Caco-2 (cell line): ENCODE measurements at regions of chr1 and their contacts with region 1.

Region 1: GRCh38 chr1:111481387-111482221 is 7.8 kb downstream of the C1orf162 start:
- DNase-seq: peak; percentile 78 to 83
- H3K4me3 ChIP-seq: no peak overlapping the region
- H3K4me3 Mint-ChIP-seq: no peak overlapping the region
- H3K27ac Mint-ChIP-seq: no peak overlapping the region
- H3K4me1 ChIP-seq: no peaks in the 10 kb centered on the region
- H3K4me1 Mint-ChIP-seq: no peaks in the 10 kb centered on the region
- H3K27me3 ChIP-seq: no peaks in the 10 kb centered on the region
- H3K27me3 Mint-ChIP-seq: no peaks in the 10 kb centered on the region
- CTCF ChIP-seq: peak; percentile 63 to 75

Region 2: DNA sequence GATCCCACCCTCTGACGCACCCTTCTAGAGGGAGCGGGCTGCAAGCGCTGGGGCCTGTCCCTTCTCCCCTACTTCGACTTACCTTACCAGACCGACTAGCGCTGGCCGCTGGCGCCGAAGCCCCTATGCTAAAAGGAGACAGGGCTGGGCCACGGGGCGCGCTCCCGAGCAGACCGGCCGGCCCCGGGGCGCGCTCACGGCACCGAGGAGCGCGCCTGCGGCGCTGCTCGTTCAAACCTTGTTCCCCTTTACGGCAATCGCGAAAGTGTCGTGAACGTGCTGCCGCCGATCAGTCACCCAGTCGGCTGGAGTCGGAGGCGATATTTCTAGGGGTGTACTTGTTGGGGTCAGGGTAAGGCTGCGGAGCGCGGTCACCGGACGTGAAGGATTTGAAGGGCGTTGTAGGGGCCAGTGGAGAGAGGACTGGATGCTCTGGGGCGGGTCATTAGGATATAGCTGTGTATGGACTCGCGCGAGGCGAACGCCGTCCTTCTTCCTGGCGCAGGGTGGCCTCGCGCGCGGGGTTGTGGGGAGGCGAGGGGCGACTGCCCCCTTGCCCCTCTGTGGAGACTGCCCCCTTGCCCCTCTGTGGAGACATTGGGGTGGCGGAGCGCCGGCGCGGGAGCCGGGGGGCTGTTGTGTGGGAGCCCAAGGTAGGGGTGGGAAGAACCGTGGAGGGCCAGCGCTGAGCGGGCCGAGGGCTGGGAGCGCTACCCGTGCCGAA is 341.5 kb before region 1 on chr1 and contains the starts of genes CEPT1 and DRAM2:
- CTCF ChIA-PET with region 1: no interaction called
- POLR2A ChIA-PET with region 1: no interaction called
- intact Hi-C with region 1: no loop called
- DNase-seq: peak; percentile 93 to 95
- H3K4me3 ChIP-seq: peak within 1 kb of the TSS; percentile 56
- H3K4me3 Mint-ChIP-seq: peak within 1 kb of the TSS; percentile 87
- H3K27ac Mint-ChIP-seq: peak within 1 kb of the TSS; percentile 89
- H3K4me1 ChIP-seq: peaks cover 14% of the 10 kb centered on the region; the same call in 1 of the 2 replicates
- H3K4me1 Mint-ChIP-seq: peaks cover 18% of the 10 kb centered on the region
- H3K27me3 ChIP-seq: no peaks in the 10 kb centered on the region
- H3K27me3 Mint-ChIP-seq: no peaks in the 10 kb centered on the region
- CTCF ChIP-seq: no peak
- total RNA-seq, gene CEPT1: 17.3 and 19.1 TPM in 2 replicates
- total RNA-seq, gene DRAM2: 25.3 and 29.0 TPM in 2 replicates

Region 3: GRCh38 chr1:111448918-111449702 is 32.5 kb before region 1 on chr1 and contains the starts of genes ATP5PB and WDR77:
- CTCF ChIA-PET with region 1: no interaction called
- POLR2A ChIA-PET with region 1: no interaction called
- intact Hi-C with region 1: no loop called
- DNase-seq: peak; percentile 93 to 96
- H3K4me3 ChIP-seq: peak within 1 kb of the TSS; percentile 76
- H3K4me3 Mint-ChIP-seq: peak within 1 kb of the TSS; percentile 97
- H3K27ac Mint-ChIP-seq: peak within 1 kb of the TSS; percentile 99
- H3K4me1 ChIP-seq: peaks cover 14% of the 10 kb centered on the region
- H3K4me1 Mint-ChIP-seq: peaks cover 20% of the 10 kb centered on the region
- H3K27me3 ChIP-seq: no peaks in the 10 kb centered on the region
- H3K27me3 Mint-ChIP-seq: no peaks in the 10 kb centered on the region
- CTCF ChIP-seq: no peak
- total RNA-seq, gene ATP5PB: 194 and 219 TPM in 2 replicates
- total RNA-seq, gene WDR77: 30.1 and 31.9 TPM in 2 replicates

Region 4: GRCh38 chr1:111463029-111463683 is 18.4 kb before region 1 on chr1:
- CTCF ChIA-PET with region 1: no interaction called
- POLR2A ChIA-PET with region 1: no interaction called
- intact Hi-C with region 1: no loop called
- DNase-seq: no peak
- H3K4me3 ChIP-seq: no peak overlapping the region
- H3K4me3 Mint-ChIP-seq: no peak overlapping the region
- H3K27ac Mint-ChIP-seq: no peak overlapping the region
- H3K4me1 ChIP-seq: peaks cover 4% of the 10 kb centered on the region; the same call in 1 of the 2 replicates
- H3K4me1 Mint-ChIP-seq: peaks cover 14% of the 10 kb centered on the region
- H3K27me3 ChIP-seq: no peaks in the 10 kb centered on the region
- H3K27me3 Mint-ChIP-seq: no peaks in the 10 kb centered on the region
- CTCF ChIP-seq: no peak

Region 5: DNA sequence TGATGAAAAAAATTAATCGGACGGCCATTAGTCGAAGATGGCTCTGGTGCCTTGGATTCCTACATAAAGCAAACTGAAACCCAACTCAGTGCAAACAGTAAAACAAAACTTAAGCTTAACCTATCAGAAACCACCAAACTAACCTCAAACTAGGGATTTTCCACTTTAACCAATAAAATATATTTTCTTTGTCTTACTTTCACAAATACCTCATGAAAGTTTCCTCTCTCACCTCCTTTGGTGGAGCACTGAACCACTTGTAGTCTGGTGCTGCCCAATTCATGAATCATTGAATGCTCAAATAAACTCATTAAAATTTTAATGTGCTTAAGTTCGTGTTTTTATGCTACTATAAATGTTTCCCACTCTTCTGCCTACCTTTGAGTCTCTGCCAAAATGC is 14.8 kb after region 1 on chr1:
- CTCF ChIA-PET with region 1: no interaction called
- POLR2A ChIA-PET with region 1: no interaction called
- intact Hi-C with region 1: no loop called
- DNase-seq: no peak
- H3K4me3 ChIP-seq: no peak overlapping the region
- H3K4me3 Mint-ChIP-seq: no peak overlapping the region
- H3K27ac Mint-ChIP-seq: no peak overlapping the region
- H3K4me1 ChIP-seq: no peaks in the 10 kb centered on the region
- H3K4me1 Mint-ChIP-seq: no peaks in the 10 kb centered on the region
- H3K27me3 ChIP-seq: no peaks in the 10 kb centered on the region
- H3K27me3 Mint-ChIP-seq: no peaks in the 10 kb centered on the region
- CTCF ChIP-seq: no peak

Region 6: DNA sequence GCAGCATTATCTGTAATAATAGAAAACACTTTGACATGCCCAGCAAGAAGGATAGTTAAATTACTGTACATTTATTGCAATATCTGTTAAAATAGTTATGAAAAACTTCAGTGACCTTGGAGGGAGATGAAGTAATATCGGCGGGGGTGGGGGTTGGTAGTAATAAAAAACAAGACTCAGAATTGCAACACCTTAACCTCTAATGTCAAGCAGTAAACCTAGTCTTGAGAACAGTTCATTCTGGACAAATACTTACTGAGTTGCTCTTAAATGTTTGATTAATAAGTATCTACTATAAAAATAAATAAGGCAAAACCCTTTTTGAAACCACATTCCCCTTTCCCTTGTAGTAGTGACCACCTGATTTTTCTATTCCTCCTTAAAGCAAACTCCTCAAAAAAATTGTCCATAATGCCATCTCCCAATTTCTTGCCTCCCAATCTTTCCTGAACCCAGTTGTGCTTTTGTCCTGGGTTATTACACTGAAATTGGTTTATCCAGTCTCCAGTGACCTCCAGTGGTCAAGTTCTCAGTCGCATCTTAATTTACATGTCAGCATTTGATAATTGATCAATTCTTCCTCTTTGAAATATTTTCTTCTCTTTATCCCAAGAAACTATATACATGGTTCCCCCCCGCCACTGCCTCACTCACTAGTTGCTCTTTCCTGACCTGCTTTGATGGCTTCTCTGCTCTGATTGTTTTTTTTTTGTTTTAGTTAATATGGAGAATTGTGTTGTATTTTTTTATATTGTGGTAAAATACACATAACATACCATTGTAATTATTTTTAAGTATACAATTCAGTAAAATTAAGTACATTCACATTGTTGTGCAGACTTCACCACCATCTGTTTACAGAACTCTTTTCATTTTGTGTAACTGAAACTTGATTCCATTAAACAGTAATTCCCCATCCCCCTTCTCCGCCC is 174.7 kb after region 1 on chr1:
- CTCF ChIA-PET with region 1: interaction called, 5 read pairs
- POLR2A ChIA-PET with region 1: no interaction called
- intact Hi-C with region 1: loop called (anchors 1 kb)
- DNase-seq: peak in 1 of 2 experiments; percentile 48
- H3K4me3 ChIP-seq: no peak overlapping the region
- H3K4me3 Mint-ChIP-seq: no peak overlapping the region
- H3K27ac Mint-ChIP-seq: peak overlapping the region; percentile 51
- H3K4me1 ChIP-seq: peaks cover 26% of the 10 kb centered on the region
- H3K4me1 Mint-ChIP-seq: peaks cover 21% of the 10 kb centered on the region
- H3K27me3 ChIP-seq: no peaks in the 10 kb centered on the region
- H3K27me3 Mint-ChIP-seq: no peaks in the 10 kb centered on the region
- CTCF ChIP-seq: peak; percentile 36 to 44

Region 7: GRCh38 chr1:111739194-111739924 is 257.8 kb after region 1 on chr1 and contains the start of gene INKA2:
- CTCF ChIA-PET with region 1: interaction called, 10 read pairs
- POLR2A ChIA-PET with region 1: no interaction called
- intact Hi-C with region 1: no loop called
- DNase-seq: peak; percentile 90 to 91
- H3K4me3 ChIP-seq: peak within 1 kb of the TSS; percentile 56
- H3K4me3 Mint-ChIP-seq: peak within 1 kb of the TSS; percentile 79
- H3K27ac Mint-ChIP-seq: peak within 1 kb of the TSS; percentile 92
- H3K4me1 ChIP-seq: peaks cover 4% of the 10 kb centered on the region; the same call in 1 of the 2 replicates
- H3K4me1 Mint-ChIP-seq: peaks cover 16% of the 10 kb centered on the region
- H3K27me3 ChIP-seq: no peaks in the 10 kb centered on the region
- H3K27me3 Mint-ChIP-seq: no peaks in the 10 kb centered on the region
- CTCF ChIP-seq: no peak
- total RNA-seq, gene INKA2: 5.8 and 8.5 TPM in 2 replicates

Region 8: GRCh38 chr1:111747282-111747734 is 265.7 kb after region 1 on chr1:
- CTCF ChIA-PET with region 1: interaction called, 30 read pairs
- POLR2A ChIA-PET with region 1: no interaction called
- intact Hi-C with region 1: loop called (anchors 1 kb)
- DNase-seq: peak; percentile 76 to 80
- H3K4me3 ChIP-seq: no peak overlapping the region
- H3K4me3 Mint-ChIP-seq: no peak overlapping the region
- H3K27ac Mint-ChIP-seq: no peak overlapping the region
- H3K4me1 ChIP-seq: no peaks in the 10 kb centered on the region
- H3K4me1 Mint-ChIP-seq: no peaks in the 10 kb centered on the region
- H3K27me3 ChIP-seq: no peaks in the 10 kb centered on the region
- H3K27me3 Mint-ChIP-seq: no peaks in the 10 kb centered on the region
- CTCF ChIP-seq: peak; percentile 60 to 74

Region 9: DNA sequence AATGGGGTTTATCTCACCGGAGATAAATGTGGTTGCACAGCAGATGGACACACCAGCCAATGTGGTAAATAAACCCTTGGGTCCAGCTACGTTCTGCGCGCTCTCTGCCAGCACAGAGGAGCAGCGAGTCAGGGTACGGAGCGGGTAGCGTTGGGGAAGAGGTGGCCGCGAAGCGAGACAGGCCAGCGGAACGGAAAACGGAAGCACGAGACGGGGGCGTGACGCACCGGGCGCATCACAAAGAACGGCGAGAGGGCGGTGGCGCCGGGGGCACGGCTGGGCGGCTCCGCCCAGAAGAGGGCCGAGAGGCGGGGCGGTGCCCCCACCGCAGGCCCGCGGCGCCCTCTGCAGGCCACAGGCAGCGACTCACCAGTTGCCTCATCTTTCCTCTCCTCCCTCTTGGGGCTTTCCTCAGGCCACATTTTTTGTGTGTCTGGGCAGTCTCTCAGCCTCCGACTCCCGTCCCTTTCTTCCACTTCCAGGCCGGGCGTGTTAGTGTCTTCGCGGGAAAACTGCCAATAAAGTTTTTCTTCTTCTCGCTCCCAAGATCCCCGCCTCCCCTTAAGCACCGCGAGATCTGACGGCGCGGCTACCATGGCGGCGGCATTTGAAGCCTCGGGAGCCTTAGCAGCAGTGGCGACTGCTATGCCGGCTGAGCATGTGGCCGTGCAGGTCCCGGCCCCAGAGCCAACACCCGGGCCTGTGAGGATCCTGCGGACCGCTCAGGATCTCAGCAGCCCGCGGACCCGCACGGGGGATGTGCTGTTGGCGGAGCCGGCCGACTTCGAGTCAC is 273.9 kb after region 1 on chr1 and contains the start of gene DDX20:
- CTCF ChIA-PET with region 1: interaction called, 11 read pairs
- POLR2A ChIA-PET with region 1: no interaction called
- intact Hi-C with region 1: no loop called
- DNase-seq: peak; percentile 86 to 90
- H3K4me3 ChIP-seq: peak within 1 kb of the TSS; percentile 79
- H3K4me3 Mint-ChIP-seq: peak within 1 kb of the TSS; percentile 92
- H3K27ac Mint-ChIP-seq: peak within 1 kb of the TSS; percentile 88
- H3K4me1 ChIP-seq: peaks cover 5% of the 10 kb centered on the region; the same call in 1 of the 2 replicates
- H3K4me1 Mint-ChIP-seq: peaks cover 12% of the 10 kb centered on the region
- H3K27me3 ChIP-seq: no peaks in the 10 kb centered on the region
- H3K27me3 Mint-ChIP-seq: no peaks in the 10 kb centered on the region
- CTCF ChIP-seq: peak; percentile 56 to 80
- total RNA-seq, gene DDX20: 10.4 and 11.6 TPM in 2 replicates

Region 10: GRCh38 chr1:111769517-111770146 is 288.0 kb after region 1 on chr1:
- CTCF ChIA-PET with region 1: interaction called, 21 read pairs
- POLR2A ChIA-PET with region 1: interaction called, 4 read pairs
- intact Hi-C with region 1: loop called (anchors 1 kb)
- DNase-seq: peak in 1 of 2 experiments; percentile 36
- H3K4me3 ChIP-seq: no peak overlapping the region
- H3K4me3 Mint-ChIP-seq: no peak overlapping the region
- H3K27ac Mint-ChIP-seq: no peak overlapping the region
- H3K4me1 ChIP-seq: no peaks in the 10 kb centered on the region
- H3K4me1 Mint-ChIP-seq: no peaks in the 10 kb centered on the region
- H3K27me3 ChIP-seq: no peaks in the 10 kb centered on the region
- H3K27me3 Mint-ChIP-seq: no peaks in the 10 kb centered on the region
- CTCF ChIP-seq: peak; percentile 57 to 61

Region 11: DNA sequence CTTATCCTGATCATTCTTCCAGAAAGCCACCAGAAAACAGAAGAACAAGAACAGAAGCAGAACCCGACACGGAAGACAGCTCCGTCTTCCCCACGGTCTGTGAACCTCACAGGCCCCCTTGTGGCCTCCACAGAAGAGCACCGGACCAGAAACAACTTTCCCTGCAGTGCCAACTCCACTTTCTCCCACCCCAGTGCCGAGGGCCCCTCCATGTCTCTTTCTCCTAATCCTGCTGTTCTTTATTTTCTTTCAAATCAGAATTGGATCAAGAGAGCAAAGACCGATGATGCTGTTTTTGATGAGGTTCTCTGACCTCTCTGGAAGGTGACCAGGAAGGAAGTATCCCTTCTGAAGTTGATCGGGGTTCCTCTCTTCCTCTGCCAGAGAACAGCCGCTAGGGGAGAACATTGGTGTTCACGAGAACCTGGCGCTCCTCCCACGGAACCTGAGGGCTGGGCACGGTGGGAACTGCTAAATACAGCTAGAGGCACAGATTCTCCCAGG is 855.5 kb after region 1 on chr1:
- CTCF ChIA-PET with region 1: no interaction called
- POLR2A ChIA-PET with region 1: no interaction called
- intact Hi-C with region 1: loop called (anchors 10 kb)
- DNase-seq: peak in 1 of 2 experiments; percentile 29
- H3K4me3 ChIP-seq: no peak overlapping the region
- H3K4me3 Mint-ChIP-seq: no peak overlapping the region
- H3K27ac Mint-ChIP-seq: no peak overlapping the region
- H3K4me1 ChIP-seq: no peaks in the 10 kb centered on the region
- H3K4me1 Mint-ChIP-seq: no peaks in the 10 kb centered on the region
- H3K27me3 ChIP-seq: no peaks in the 10 kb centered on the region; the same call in none of the 2 replicates
- H3K27me3 Mint-ChIP-seq: peaks cover 29% of the 10 kb centered on the region
- CTCF ChIP-seq: peak; percentile 26 to 59